ENCODE measurements at regions of chr4 and their contacts with region 1.

Region 1: GRCh38 chr4:25767877-25768725 is 94.7 kb downstream of the SEL1L3 start:
- H3K4me3 ChIP-seq: no peak overlapping the region
- H3K27ac ChIP-seq: no peak overlapping the region
- H3K4me1 ChIP-seq: no peaks in the 10 kb centered on the region
- CTCF ChIP-seq: 0 out of 2 replicates have a peak, but pooled peaks have one; percentile 24

Region 2: GRCh38 chr4:25439918-25440477 is 328.1 kb before region 1 on chr4:
- CTCF ChIA-PET with region 1: interaction called, 150 read pairs
- POLR2A ChIA-PET with region 1: no interaction called
- H3K4me3 ChIP-seq: no peak overlapping the region
- H3K27ac ChIP-seq: no peak overlapping the region
- H3K4me1 ChIP-seq: no peaks in the 10 kb centered on the region
- CTCF ChIP-seq: no peak

Region 3: GRCh38 chr4:25756503-25756902 is 11.6 kb before region 1 on chr4:
- CTCF ChIA-PET with region 1: interaction called, 14 read pairs
- POLR2A ChIA-PET with region 1: no interaction called
- H3K4me3 ChIP-seq: no peak overlapping the region
- H3K27ac ChIP-seq: no peak overlapping the region
- H3K4me1 ChIP-seq: no peaks in the 10 kb centered on the region
- CTCF ChIP-seq: no peak

Region 4: GRCh38 chr4:25779016-25779415 is 10.9 kb after region 1 on chr4:
- CTCF ChIA-PET with region 1: interaction called, 11 read pairs
- POLR2A ChIA-PET with region 1: no interaction called
- H3K4me3 ChIP-seq: no peak overlapping the region
- H3K27ac ChIP-seq: no peak overlapping the region
- H3K4me1 ChIP-seq: no peaks in the 10 kb centered on the region
- CTCF ChIP-seq: no peak

Region 5: GRCh38 chr4:25792200-25792791 is 24.2 kb after region 1 on chr4:
- CTCF ChIA-PET with region 1: no interaction called
- POLR2A ChIA-PET with region 1: no interaction called
- H3K4me3 ChIP-seq: no peak overlapping the region
- H3K27ac ChIP-seq: no peak overlapping the region
- H3K4me1 ChIP-seq: no peaks in the 10 kb centered on the region
- CTCF ChIP-seq: no peak